GM10248 (cell line): ENCODE measurements at regions of chr4 and their contacts with region 1.

Region 1: GRCh38 chr4:65358914-65359313 is 311.4 kb downstream of the EPHA5 start:
- DNase-seq: no peak
- CTCF ChIP-seq: no peak

Region 2: DNA sequence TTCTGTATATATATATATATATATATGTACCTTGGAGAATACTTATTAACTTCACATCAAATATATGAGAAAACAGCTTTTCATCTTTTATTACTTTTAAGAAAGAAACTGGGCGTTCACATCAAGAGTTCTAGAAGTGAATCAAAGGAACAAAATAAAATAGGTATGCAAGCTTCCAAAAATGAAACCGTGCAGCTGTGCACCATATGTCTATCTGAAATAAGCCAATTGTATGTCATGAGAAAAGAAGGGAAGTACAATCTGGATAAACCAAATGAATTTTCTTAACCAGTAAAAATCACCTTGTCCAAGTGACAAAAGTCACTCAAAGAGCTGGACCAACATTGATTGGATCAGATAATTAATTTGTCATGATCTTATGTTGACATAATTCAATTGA is 544.3 kb before region 1 on chr4:
- CTCF ChIA-PET with region 1: no interaction called
- POLR2A ChIA-PET with region 1: no interaction called
- DNase-seq: no peak
- CTCF ChIP-seq: no peak

Region 3: DNA sequence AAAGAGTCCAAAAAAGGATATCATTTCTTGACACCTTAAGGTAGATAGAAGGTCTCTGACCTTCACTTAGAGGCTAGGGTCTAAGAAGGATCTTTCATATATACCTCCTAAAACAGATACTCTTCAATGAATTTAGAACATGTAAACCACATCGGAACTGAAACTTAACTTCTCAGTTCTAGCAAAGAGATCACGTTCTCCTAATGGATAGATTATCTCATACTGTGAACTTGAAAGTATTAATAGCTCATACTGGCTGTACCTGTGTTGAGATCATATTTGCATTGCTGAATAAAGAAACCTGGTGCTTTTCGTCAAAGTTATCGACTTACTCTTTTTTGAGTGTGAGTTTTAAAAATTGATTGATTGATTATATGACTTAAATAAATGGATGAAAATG is 42.4 kb before region 1 on chr4:
- CTCF ChIA-PET with region 1: no interaction called
- POLR2A ChIA-PET with region 1: no interaction called
- DNase-seq: no peak
- CTCF ChIP-seq: no peak

Region 4: DNA sequence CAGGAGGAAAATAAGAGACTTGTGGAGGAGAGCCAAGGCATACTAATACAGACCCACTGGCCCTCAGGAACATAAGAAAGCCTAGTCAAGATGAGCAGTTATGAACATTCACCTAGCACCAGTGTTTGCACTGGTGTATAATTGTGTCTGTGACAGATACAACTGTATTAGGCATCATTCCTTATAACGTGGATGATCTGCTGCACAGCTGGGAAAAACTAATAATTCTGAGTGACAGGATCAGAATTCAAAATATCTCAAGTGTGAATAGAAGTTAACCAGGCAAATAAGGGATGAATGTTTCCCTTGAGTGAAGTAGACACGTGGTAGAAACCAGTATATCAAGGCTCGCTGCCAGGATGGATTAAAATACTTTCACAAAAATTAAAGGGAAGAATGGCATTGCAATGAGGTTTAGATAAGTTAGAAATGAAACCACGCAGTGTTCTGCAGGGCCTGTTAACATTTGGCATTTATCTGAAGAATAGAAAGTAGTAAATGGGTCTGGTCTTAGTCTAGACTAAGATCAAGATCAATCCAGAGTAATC is 14.6 kb before region 1 on chr4:
- CTCF ChIA-PET with region 1: interaction called, 11 read pairs
- POLR2A ChIA-PET with region 1: no interaction called
- DNase-seq: no peak
- CTCF ChIP-seq: no peak

Region 5: DNA sequence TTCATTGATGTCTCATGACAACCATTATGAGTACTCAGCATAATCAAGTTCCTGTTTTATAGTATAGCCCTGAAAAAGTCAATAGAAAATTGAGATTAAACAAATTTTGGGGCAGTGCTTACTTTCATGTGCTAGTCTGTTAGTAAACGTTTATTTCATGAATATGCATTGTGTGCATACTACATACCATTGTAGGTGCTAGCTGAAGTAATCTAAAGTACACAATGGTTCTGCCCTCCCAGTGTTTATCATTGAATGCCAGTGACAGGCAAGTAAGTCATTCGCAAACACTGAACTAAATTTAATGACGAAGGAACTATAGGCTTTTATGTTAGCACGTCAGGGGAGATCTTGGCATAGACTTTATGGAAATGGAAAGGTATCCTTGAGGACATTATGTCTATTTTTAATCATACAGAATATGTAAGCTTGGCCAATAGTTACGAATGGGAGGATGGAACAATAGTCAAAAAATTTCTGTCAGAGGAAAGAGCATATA is 738.3 kb after region 1 on chr4:
- CTCF ChIA-PET with region 1: no interaction called
- POLR2A ChIA-PET with region 1: no interaction called
- DNase-seq: no peak
- CTCF ChIP-seq: no peak